ENCODE measurements at regions of chr10 and their contacts with region 1.

Region 1: DNA sequence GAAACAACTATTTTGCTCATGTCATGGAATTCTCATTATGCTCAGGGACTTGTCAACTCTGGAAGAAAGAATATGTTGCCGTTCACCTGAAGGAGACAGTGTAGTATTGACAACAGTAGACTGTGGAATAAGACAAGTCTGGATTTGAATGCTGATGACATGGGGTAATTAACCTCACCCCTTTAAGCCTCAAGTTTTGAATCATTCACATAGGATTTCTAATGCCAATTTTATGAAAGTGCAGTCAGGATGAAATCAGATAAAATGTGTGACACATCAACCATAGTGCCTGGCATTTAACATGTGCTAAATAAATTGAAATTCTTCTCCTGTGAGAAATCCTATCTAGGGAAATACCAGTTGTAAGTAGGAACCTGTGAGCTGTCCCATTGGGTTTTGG is 305.8 kb downstream of the KIF20B start:
- DNase-seq: no peak

Region 2: DNA sequence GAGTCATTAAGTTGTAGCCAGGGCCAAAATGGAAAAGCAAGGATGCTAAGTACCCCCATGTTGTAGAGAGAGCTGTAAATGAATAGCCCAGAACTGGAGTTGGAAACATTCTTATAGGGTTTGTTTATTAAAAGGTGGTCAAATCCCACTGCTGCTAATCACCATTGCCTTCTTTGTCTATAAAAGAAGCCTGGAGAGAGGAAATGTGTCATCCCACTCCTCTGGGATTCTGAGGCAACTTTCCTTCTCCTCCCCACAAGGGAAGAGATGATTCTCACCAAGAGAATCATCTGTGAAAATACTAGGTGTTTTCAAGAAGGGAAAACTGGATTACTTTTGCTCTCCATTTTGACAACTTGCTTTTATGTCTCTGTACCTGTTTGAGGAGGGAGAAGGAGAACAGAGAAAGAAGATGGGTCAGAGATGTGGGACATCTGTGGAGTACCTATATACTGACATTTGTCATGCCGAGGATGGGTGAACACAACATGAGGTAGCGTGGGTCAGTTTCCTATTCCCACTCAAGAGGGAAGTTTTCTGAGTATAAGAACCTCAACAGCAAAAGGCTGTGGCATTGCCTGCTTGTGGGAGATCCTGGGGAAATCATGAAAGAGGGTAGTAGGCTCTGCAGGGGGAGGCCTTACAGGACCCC is 43.6 kb before region 1 on chr10:
- intact Hi-C with region 1: loop called in 1 of 2 experiments (anchors 2 kb)
- DNase-seq: no peak

Region 3: GRCh38 chr10:90193240-90193985 is 186.2 kb after region 1 on chr10:
- intact Hi-C with region 1: no loop called
- DNase-seq: no peak

Measured in posterior vena cava (tissue), 2 donors.